T-cell (primary cell): ENCODE measurements at regions of chr10 and their contacts with region 1.

Region 1: DNA sequence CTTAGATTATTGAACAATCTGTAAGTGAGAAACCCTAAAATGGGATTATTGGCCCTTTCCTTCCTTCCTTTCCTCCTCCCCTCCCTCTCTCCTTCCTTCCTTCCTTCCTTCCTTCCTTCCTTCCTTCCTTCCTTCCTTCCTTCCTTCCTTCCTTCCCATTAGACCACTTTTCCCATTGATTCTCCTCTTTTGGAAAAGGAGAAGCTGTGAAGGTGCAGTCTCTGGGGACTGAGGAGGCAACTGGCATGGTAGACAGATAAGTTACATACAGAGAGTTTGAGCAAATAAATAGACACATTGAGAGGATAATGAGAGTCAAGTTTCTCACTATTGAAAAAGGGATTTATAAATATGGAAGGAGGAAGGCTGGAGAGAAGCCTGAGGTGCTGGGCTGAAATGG is 45.0 kb upstream of the CCDC7 start:
- DNase-seq: no peak
- ATAC-seq: no peak
- H3K4me3 ChIP-seq: no peak overlapping the region
- H3K4me3 Mint-ChIP-seq: no peak overlapping the region
- H3K27ac ChIP-seq: no peak overlapping the region
- H3K27ac Mint-ChIP-seq: no peak overlapping the region
- H3K4me1 ChIP-seq: no peaks in the 10 kb centered on the region
- H3K4me1 Mint-ChIP-seq: no peaks in the 10 kb centered on the region
- H3K27me3 ChIP-seq: no peaks in the 10 kb centered on the region
- H3K27me3 Mint-ChIP-seq: no peaks in the 10 kb centered on the region

Region 2: GRCh38 chr10:32332299-32332750 is 68.6 kb before region 1 on chr10:
- CTCF ChIA-PET with region 1: no interaction called
- POLR2A ChIA-PET with region 1: interaction called in 1 of 2 experiments, 16 read pairs
- DNase-seq: peak in 34 of 35 experiments; percentile 34 to 89 (median 74)
- ATAC-seq: peak; percentile 91 to 93 (median 92)
- H3K4me3 ChIP-seq: no peak overlapping the region
- H3K4me3 Mint-ChIP-seq: peak overlapping the region; percentile 41 to 75 (median 63)
- H3K27ac ChIP-seq: peak overlapping the region; percentile 38
- H3K27ac Mint-ChIP-seq: peak overlapping the region; percentile 75
- H3K4me1 ChIP-seq: peaks cover 45 to 50% of the 10 kb centered on the region in 2 experiments
- H3K4me1 Mint-ChIP-seq: peaks cover 96 to 97% (median 97%) of the 10 kb centered on the region in 3 donors
- H3K27me3 ChIP-seq: no peaks in the 10 kb centered on the region
- H3K27me3 Mint-ChIP-seq: no peaks in the 10 kb centered on the region